Naive thymus-derived CD4-positive, alpha-beta T cell (primary cell): ENCODE measurements at regions of chrX and their contacts with region 1.

Region 1: GRCh38 chrX:108044554-108045256 is at the start of gene VSIG1:
- DNase-seq: no peak
- ATAC-seq: no peak
- H3K4me3 ChIP-seq: no peak within 1 kb of the TSS
- H3K4me3 Mint-ChIP-seq: no peak within 1 kb of the TSS
- H3K27ac ChIP-seq: no peak within 1 kb of the TSS
- H3K27ac Mint-ChIP-seq: peak within 1 kb of the TSS in 3 of 9 donors; percentile 6 to 67 (median 48)
- H3K4me1 ChIP-seq: no peaks in the 10 kb centered on the region
- H3K4me1 Mint-ChIP-seq: peaks cover 0 to 47% (median 25%) of the 10 kb centered on the region in 7 donors
- H3K27me3 ChIP-seq: no peaks in the 10 kb centered on the region
- H3K27me3 Mint-ChIP-seq: no peaks in the 10 kb centered on the region
- total RNA-seq, gene VSIG1: 7.8 to 50.2 (median 32.7) TPM

Region 2: GRCh38 chrX:107905366-107905765 is 139.3 kb before region 1 on chrX:
- CTCF ChIA-PET with region 1: no interaction called
- POLR2A ChIA-PET with region 1: no interaction called
- intact Hi-C with region 1: no loop called
- DNase-seq: no peak
- ATAC-seq: no peak
- H3K4me3 ChIP-seq: no peak overlapping the region
- H3K4me3 Mint-ChIP-seq: no peak overlapping the region
- H3K27ac ChIP-seq: no peak overlapping the region
- H3K27ac Mint-ChIP-seq: no peak overlapping the region
- H3K4me1 ChIP-seq: no peaks in the 10 kb centered on the region
- H3K4me1 Mint-ChIP-seq: peaks cover 0 to 11% (median 0%) of the 10 kb centered on the region in 7 donors
- H3K27me3 ChIP-seq: no peaks in the 10 kb centered on the region
- H3K27me3 Mint-ChIP-seq: no peaks in the 10 kb centered on the region

Region 3: DNA sequence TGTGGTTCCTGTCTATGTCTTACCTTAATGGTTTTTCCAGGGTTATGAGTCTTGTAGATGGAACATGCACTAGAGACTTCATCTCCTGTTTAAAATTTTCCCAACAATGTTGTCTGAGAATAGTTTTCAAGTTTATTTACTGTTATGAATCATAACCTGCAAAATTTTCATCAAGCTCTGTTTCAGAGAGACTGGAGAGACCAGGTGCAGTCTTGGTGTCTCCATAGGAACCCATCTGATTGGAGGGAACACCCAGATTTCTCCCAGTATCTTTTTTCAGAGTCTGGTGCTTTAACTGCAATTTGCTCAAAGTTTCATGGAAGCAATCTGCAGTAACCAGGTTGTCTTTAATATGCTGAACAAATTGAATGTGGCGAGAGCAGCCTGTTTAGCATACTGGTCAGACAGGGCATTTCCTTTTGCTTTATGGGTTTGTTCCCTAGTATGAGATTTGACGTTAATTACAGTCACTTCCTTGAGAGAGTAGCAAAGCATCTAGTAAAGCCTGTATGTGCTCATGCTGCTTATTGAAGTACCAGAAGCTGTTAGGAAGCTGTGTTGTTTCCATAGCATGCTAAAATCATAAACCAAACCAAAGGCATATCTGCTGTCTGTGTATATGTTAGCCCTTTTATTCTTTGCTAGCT is 18.6 kb before region 1 on chrX:
- CTCF ChIA-PET with region 1: no interaction called
- POLR2A ChIA-PET with region 1: no interaction called
- intact Hi-C with region 1: loop called in 1 of 2 experiments (anchors 2 kb)
- DNase-seq: peak in 6 of 9 donors; percentile 20 to 41 (median 35)
- ATAC-seq: peak; percentile 89
- H3K4me3 ChIP-seq: no peak overlapping the region
- H3K4me3 Mint-ChIP-seq: peak overlapping the region in 5 of 10 donors; percentile 7 to 36 (median 31)
- H3K27ac ChIP-seq: no peak overlapping the region
- H3K27ac Mint-ChIP-seq: peak overlapping the region in 7 of 9 donors; percentile 11 to 89 (median 40)
- H3K4me1 ChIP-seq: peaks cover 8 to 32% of the 10 kb centered on the region in 2 donors
- H3K4me1 Mint-ChIP-seq: peaks cover 17 to 91% (median 73%) of the 10 kb centered on the region in 7 donors
- H3K27me3 ChIP-seq: no peaks in the 10 kb centered on the region
- H3K27me3 Mint-ChIP-seq: peaks cover 0 to 1% (median 0%) of the 10 kb centered on the region in 5 donors

Region 4: DNA sequence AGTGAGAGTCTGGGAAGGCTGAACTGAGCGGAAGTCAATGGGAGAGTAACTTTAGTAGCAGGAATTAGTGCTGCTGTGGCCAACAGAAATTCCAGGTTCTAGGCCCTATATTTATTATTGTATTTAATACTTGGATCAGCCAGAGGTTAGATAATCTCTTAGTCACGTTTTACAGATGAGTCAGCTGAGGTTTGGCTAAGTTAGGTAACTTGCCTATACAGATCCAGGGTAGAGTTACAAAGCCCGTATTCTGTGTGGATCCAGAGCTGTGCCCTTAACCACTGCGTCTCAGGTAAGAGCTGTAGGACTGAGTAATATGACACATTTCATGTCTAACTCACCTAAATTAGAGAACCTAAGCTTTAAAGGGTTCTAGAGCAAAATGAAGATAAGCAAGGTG is 26.2 kb after region 1 on chrX:
- CTCF ChIA-PET with region 1: no interaction called
- POLR2A ChIA-PET with region 1: no interaction called
- intact Hi-C with region 1: no loop called
- DNase-seq: no peak
- ATAC-seq: no peak
- H3K4me3 ChIP-seq: no peak overlapping the region
- H3K4me3 Mint-ChIP-seq: no peak overlapping the region
- H3K27ac ChIP-seq: no peak overlapping the region
- H3K27ac Mint-ChIP-seq: peak overlapping the region in 4 of 9 donors; percentile 22 to 78 (median 36)
- H3K4me1 ChIP-seq: no peaks in the 10 kb centered on the region
- H3K4me1 Mint-ChIP-seq: peaks cover 0 to 11% (median 1%) of the 10 kb centered on the region in 7 donors
- H3K27me3 ChIP-seq: no peaks in the 10 kb centered on the region
- H3K27me3 Mint-ChIP-seq: peaks cover 0 to 7% (median 0%) of the 10 kb centered on the region in 5 donors

Region 5: GRCh38 chrX:108148524-108148923 is 103.8 kb after region 1 on chrX:
- CTCF ChIA-PET with region 1: no interaction called
- POLR2A ChIA-PET with region 1: no interaction called
- intact Hi-C with region 1: no loop called
- DNase-seq: no peak
- ATAC-seq: no peak
- H3K4me3 ChIP-seq: no peak overlapping the region
- H3K4me3 Mint-ChIP-seq: no peak overlapping the region
- H3K27ac ChIP-seq: no peak overlapping the region
- H3K27ac Mint-ChIP-seq: no peak overlapping the region
- H3K4me1 ChIP-seq: no peaks in the 10 kb centered on the region
- H3K4me1 Mint-ChIP-seq: peaks cover 0 to 11% (median 0%) of the 10 kb centered on the region in 7 donors
- H3K27me3 ChIP-seq: no peaks in the 10 kb centered on the region
- H3K27me3 Mint-ChIP-seq: no peaks in the 10 kb centered on the region

Region 6: GRCh38 chrX:109485470-109486340 is 1441.0 kb after region 1 on chrX:
- CTCF ChIA-PET with region 1: no interaction called
- POLR2A ChIA-PET with region 1: no interaction called
- intact Hi-C with region 1: no loop called
- DNase-seq: peak; percentile 7 to 70 (median 50)
- ATAC-seq: peak; percentile 92
- H3K4me3 ChIP-seq: no peak overlapping the region
- H3K4me3 Mint-ChIP-seq: no peak overlapping the region
- H3K27ac ChIP-seq: no peak overlapping the region
- H3K27ac Mint-ChIP-seq: no peak overlapping the region
- H3K4me1 ChIP-seq: no peaks in the 10 kb centered on the region
- H3K4me1 Mint-ChIP-seq: peaks cover 0 to 2% (median 0%) of the 10 kb centered on the region in 7 donors
- H3K27me3 ChIP-seq: no peaks in the 10 kb centered on the region
- H3K27me3 Mint-ChIP-seq: peaks cover 0 to 14% (median 0%) of the 10 kb centered on the region in 5 donors